ENCODE measurements at regions of chr6 and their contacts with region 1.

Region 1: DNA sequence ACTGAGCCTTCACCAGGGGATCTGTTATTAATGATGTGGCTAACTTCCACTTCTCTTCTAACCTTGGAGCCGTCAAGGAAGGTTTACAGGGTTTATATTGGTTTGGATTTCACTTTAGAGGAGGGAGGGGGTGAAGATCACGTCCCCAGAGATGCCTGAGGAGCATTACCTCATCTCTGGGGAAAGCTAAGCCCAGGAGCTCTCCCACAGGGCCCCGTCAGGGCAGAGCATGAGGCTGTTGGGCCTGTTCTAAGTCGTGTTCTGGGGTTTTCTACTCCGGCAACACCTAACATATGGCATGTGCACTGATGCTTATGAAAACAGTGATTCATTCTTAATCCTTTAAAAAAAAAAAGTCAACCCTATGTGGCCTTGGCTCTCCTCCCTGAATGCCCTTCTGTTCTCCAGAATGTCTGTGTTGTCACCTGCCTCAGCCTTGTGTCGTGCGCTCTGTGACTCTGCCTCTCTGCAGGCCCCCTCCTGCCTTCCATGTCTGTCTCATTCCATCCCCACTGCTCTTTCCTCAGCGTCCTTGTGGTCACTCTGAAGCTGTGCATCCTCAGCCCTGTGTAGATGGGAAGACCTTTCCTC is 97.4 kb upstream of the JARID2 start:
- DNase-seq: peak; percentile 48
- H3K4me3 ChIP-seq: no peak overlapping the region
- CTCF ChIP-seq: peak; percentile 24

Region 2: DNA sequence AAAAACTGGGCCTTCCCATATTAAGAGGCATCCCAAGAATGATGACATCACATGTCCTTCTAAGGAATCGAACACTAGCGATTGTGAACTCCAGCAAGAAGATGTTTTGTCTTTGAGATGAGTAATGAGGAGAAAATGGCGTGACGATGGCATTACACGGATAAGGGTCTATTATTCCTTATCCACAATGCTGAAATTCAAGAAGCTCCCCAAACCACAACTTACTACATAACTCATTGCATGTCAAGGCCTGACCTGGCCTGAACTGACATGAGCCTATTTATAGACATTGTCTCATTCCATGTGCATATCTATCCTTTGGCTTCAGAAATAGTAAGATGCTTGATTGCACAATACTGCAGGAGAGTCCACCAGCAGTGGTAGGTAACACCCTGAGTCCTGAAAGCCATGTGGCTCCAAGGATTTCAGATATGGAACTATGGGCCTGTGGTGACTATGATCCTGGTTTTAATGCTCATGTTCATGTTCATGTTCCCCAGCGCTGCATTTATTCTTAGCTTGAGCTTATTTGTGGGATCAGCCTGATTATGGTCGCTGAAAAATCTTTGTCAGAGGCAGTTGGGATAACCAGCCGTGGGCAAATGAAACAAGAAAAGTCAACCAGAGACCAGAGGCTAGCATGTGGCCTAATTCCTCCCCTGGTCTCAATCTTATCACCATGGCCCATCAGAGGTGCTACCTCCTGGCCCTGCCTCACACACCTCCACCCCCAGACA is 85.8 kb before region 1 on chr6:
- in situ Hi-C with region 1: no loop called
- DNase-seq: peak; percentile 19
- H3K4me3 ChIP-seq: no peak overlapping the region
- CTCF ChIP-seq: no peak

Region 3: DNA sequence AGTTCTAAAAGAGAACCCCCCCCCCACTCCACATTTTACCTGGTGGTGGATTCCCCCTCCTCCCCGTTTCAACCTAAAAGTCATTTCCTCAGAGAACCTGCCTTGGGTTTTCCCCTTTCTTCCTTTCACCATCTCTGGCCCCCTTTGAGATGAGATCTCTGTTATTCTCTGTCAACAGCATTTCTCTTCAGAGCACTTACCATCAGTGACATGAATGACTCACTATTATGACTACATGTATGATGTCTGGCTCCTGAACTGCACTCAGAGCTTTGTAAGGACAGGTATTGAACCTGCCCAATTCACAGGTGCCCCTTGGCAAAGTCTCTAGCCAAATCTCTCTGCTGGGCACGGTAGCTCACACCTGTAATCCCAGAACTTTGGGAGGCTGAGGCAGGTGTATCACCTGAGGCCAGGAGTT is 36.0 kb after region 1 on chr6:
- in situ Hi-C with region 1: no loop called
- DNase-seq: no peak
- H3K4me3 ChIP-seq: no peak overlapping the region
- CTCF ChIP-seq: no peak

Region 4: GRCh38 chr6:15194453-15194852 is 46.0 kb after region 1 on chr6:
- in situ Hi-C with region 1: no loop called
- DNase-seq: no peak
- H3K4me3 ChIP-seq: no peak overlapping the region
- CTCF ChIP-seq: no peak

Region 5: DNA sequence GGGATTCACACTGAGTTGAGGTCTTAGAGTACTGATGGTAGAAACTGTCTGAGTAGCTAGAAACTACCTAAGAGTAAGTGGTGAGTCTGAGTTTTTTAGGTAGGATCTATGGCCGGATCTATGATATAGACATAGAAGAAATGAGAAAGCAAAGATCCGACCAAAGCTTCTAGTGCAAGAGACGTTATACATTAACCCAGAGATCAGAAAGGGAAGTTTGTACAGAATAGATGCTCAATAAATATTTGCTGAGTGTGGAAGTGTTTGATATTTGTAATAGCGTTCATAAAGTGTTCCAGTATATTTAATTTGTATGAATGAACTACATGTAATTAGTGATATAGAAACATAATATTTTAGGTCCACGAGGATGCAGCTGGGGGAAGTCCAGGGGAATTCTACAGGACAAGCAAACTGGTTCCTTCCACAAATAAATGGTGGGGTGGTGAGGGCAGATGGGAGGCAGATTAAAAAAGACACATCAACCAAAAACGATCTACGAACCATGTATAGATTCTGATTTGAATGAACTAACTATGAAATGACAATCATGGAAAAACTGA is 65.5 kb after region 1 on chr6:
- in situ Hi-C with region 1: loop called (anchors 10 kb)
- DNase-seq: no peak
- H3K4me3 ChIP-seq: no peak overlapping the region
- CTCF ChIP-seq: no peak

Region 6: DNA sequence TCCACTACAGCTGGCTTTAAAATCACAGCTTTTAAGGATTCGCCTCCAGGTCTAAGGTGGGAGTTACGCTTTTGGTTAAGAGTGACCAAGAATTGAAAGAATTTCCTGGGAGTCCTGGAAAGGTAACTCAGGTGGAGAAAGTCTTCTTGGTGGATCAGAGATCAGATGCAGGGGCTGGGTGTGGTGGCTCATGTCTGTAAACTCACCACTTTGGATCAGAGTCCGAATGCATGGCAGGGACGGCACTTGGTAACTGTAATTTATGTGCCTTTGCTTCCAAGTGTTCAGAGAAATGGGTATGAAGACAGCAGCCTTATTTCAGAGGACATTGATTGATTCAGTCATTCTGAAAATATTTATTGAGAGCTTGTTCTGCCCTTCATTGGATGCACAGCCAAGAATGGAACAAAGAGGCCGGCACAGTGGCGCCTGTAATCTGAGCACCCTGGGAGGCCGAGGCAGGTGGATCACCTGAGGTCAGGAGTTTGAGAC is 79.4 kb after region 1 on chr6:
- in situ Hi-C with region 1: no loop called
- DNase-seq: no peak
- H3K4me3 ChIP-seq: no peak overlapping the region
- CTCF ChIP-seq: no peak